ENCODE measurements at regions of chr7 and their contacts with region 1.

Region 1: DNA sequence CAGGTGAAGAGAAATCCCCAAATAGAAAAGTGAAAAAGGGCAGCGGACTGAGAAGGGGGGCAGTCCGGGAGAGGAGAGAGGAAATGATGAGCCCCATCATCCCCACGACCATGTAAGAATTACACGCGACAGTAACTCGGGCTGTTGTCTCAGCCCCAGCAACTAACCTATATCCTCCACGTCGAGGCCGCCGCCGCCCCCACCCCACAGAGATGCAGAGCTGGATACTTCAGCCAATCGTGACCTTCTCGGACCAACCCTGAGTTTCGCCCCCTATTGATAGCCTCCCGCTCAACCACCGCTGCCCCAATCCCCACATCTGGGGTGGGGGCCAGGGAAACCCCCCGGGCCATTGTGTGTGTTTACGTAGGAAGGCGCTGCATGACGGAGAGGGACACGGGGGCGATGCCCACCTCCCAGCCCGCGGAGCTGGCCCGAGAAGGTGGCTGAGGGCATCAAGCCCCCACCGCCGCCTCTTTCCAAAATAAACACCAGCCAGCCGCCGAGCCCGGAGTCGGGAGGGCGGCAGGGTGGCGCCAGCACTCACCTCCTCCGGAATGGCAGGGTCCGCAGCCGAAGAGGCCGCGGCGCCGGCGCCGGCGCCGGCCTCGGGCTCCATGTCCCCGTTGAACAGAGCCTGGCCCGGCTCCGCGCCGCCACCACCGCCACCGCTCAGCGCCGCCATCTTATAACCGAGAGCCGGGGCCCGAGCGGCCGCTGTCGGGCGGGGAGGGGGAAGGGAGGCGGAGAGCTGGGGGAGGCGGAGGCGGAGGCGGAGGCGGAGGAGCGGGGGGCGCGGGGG is 509 bp downstream of the BRAF start:
- DNase-seq: peak; percentile 93
- ATAC-seq: peak; percentile 89

Region 2: GRCh38 chr7:140752533-140752932 is 171.7 kb before region 1 on chr7:
- intact Hi-C with region 1: no loop called
- DNase-seq: no peak
- ATAC-seq: no peak

Region 3: GRCh38 chr7:140810830-140811556 is 113.2 kb before region 1 on chr7:
- intact Hi-C with region 1: loop called (anchors 2 kb)
- DNase-seq: no peak
- ATAC-seq: peak; percentile 91

Region 4: DNA sequence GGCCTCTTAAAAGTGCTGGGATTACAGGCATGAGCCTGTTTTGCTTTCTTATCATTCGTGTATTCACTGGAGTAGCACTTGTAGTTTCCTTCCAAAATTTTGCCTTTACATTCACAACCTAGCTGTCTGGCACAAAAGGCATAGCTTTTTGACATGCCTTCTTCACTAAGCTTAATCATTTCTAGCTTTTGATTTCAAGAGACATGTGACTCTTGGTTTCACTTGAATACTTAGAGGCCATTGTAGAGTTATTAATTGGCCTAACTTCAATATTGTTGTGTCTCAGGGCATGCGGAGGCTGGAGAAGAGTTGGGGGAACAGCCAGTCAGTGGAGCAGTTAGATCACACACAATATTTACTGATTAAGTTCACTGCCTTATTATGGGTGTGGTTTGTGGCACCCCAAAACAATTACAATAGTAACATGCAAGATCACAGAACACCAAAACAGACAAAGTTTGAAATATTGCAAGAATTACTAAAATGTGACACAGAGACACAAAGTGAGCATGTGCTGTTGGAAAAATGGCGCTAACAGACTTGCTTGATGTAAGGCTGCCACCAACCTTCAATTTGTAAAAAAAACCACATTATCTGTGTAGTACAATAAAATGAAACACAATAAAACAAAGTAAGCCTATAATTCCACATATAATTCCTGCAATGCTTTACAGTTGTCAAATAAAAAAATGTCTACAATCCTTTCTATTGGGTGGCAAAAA is 42.6 kb before region 1 on chr7:
- intact Hi-C with region 1: no loop called
- DNase-seq: no peak
- ATAC-seq: no peak

Region 5: DNA sequence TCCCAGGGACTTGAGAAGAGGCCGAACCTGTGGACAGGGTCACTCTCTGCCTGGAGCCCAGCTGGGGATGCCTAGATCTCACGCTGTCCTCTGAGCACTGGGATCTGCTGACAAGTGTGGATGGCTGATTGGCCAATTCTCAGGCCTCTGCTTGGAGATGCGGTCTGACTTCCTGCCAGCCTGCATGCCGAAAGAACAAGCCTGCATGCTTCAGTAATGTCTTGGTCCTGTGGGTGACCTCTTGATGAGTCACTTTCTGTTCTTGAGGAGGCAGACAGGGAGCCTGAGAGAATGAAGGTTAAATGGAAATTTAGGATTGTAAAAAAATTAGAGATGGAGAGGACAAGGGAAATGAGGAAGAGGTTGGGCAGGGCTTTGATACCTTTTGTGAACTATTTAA is 234.4 kb after region 1 on chr7:
- intact Hi-C with region 1: no loop called
- DNase-seq: no peak
- ATAC-seq: no peak

Measured in Right ventricle myocardium inferior (tissue), 1 donor.